MCF 10A (cell line): ENCODE measurements at regions of chr7 and their contacts with region 1.

Region 1: GRCh38 chr7:44565097-44565794 is 8.5 kb downstream of the DDX56 start:
- DNase-seq: peak; percentile 62
- H3K4me3 Mint-ChIP-seq: no peak overlapping the region
- H3K27ac Mint-ChIP-seq: no peak overlapping the region
- H3K4me1 Mint-ChIP-seq: peaks cover 16% of the 10 kb centered on the region
- H3K27me3 Mint-ChIP-seq: no peaks in the 10 kb centered on the region
- CTCF ChIP-seq: peak; percentile 95

Region 2: DNA sequence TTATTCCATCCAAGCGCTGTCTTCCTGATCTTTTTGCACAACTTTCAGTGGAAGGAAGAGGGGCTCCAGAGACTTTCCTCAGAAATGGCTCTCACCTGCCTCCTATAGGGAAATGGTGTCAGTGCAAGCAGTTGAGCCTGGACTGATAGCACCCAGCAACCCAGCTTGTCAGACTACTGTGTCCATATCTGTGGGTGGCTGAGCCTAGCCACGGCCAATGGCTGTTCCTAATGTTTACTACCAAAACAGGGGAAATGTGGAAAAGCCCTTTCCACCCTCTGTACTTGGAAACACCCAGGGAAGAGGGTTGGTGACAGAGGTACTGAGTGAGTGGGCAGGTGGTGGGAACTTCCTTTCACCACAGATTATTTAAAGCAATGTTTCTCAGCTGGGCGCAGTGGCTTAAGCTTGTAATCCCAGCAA is 368.8 kb before region 1 on chr7:
- CTCF ChIA-PET with region 1: no interaction called
- POLR2A ChIA-PET with region 1: no interaction called
- intact Hi-C with region 1: no loop called
- DNase-seq: peak; percentile 71
- H3K4me3 Mint-ChIP-seq: no peak overlapping the region
- H3K27ac Mint-ChIP-seq: no peak overlapping the region
- H3K4me1 Mint-ChIP-seq: peaks cover 7% of the 10 kb centered on the region
- H3K27me3 Mint-ChIP-seq: no peaks in the 10 kb centered on the region
- CTCF ChIP-seq: peak; percentile 63

Region 3: GRCh38 chr7:44240983-44241510 is 324.2 kb before region 1 on chr7:
- CTCF ChIA-PET with region 1: interaction called, 51 read pairs
- POLR2A ChIA-PET with region 1: no interaction called
- intact Hi-C with region 1: loop called (anchors 1 kb)
- DNase-seq: peak; percentile 85
- H3K4me3 Mint-ChIP-seq: no peak overlapping the region
- H3K27ac Mint-ChIP-seq: peak overlapping the region; percentile 27
- H3K4me1 Mint-ChIP-seq: peaks cover 7% of the 10 kb centered on the region
- H3K27me3 Mint-ChIP-seq: no peaks in the 10 kb centered on the region
- CTCF ChIP-seq: peak; percentile 83

Region 4: DNA sequence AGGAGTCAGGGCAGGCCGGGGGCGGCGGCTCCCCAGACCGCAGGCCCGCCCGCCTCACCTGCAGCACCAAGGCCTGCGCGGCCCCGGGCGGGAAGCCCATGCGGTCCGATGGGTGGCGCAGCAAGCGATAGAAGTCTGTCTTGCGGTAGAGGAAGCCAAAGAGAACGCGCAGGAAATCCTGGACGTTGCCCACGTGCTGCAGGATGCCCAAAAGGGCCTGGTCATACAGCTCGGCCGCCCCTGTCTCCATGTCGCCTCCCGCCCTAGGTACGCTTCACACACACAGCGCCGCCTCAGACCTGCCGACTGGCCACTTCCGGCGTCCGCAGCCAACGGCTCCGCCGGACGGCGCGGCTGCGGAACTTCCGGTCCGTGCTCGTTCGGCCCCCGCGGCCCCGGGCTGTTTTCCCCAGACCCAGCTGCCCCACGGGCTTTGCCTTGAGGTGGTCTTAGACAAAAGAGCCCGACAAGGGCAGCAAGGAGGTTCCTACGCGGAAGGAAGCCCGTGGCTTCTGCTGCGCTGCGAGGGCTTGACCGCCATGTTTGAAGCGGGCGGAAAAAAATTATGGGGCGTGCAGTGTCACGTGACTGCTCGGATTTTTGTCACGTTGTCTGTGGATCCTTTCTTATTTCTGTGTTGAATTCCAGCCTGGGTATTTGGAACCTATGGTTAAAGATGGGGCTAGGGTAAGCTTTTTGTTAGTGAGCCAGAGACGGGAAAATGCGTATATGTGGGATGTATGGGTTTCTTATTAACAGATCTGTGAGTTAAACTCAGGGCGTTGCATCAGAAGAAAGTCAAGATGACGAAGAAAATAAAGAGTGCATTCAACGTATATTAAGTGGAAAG is 74.7 kb before region 1 on chr7 and contains the start of gene NUDCD3:
- CTCF ChIA-PET with region 1: interaction called, 43 read pairs
- POLR2A ChIA-PET with region 1: interaction called, 52 read pairs
- intact Hi-C with region 1: loop called (anchors 1 kb)
- DNase-seq: peak; percentile 84
- H3K4me3 Mint-ChIP-seq: peak within 1 kb of the TSS; percentile 80
- H3K27ac Mint-ChIP-seq: peak within 1 kb of the TSS; percentile 88
- H3K4me1 Mint-ChIP-seq: peaks cover 37% of the 10 kb centered on the region
- H3K27me3 Mint-ChIP-seq: no peaks in the 10 kb centered on the region
- CTCF ChIP-seq: no peak
- total RNA-seq, gene NUDCD3: 85.5 and 87.7 TPM in 2 replicates

Region 5: GRCh38 chr7:44534501-44534900 is 30.7 kb before region 1 on chr7:
- CTCF ChIA-PET with region 1: interaction called, 12 read pairs
- POLR2A ChIA-PET with region 1: no interaction called
- intact Hi-C with region 1: no loop called
- DNase-seq: peak; percentile 62
- H3K4me3 Mint-ChIP-seq: no peak overlapping the region
- H3K27ac Mint-ChIP-seq: no peak overlapping the region
- H3K4me1 Mint-ChIP-seq: peaks cover 9% of the 10 kb centered on the region
- H3K27me3 Mint-ChIP-seq: no peaks in the 10 kb centered on the region
- CTCF ChIP-seq: peak; percentile 53

Region 6: DNA sequence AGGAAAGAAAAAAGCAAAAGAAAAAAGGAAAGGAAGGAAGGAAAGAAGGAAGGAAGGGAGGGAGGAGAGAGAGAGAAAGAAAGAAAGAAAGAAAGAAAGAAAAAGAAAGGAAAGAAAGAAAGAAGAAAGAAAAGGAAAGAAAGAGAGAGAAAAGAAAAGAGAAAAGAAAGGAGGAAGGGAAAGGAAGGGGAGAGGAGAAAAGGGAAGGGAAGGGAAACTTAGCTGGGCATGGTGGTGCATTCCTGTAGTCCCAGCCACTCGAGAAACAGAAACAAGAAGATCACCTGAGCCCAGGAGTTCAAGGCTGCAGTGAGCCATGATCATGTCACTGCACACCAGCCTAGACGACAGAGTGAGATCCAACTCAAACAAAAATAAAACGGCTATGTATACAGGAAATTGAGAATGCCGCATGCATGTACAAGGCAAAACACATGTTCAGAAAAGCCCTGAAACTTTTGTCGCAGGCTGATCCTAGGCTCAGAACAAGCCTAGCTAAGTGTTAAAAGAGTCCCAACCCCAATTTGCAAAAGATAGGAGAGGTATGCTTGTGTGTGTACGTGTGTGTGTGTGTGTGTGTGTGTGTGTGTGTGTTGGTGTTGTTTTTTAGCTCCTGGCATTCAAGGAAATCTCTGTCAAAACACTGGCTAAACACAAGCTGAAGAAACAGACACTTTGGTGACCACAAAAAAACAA is 17.6 kb before region 1 on chr7:
- CTCF ChIA-PET with region 1: interaction called, 36 read pairs
- POLR2A ChIA-PET with region 1: interaction called, 15 read pairs
- intact Hi-C with region 1: no loop called
- DNase-seq: peak; percentile 24
- H3K4me3 Mint-ChIP-seq: no peak overlapping the region
- H3K27ac Mint-ChIP-seq: no peak overlapping the region
- H3K4me1 Mint-ChIP-seq: peaks cover 27% of the 10 kb centered on the region
- H3K27me3 Mint-ChIP-seq: no peaks in the 10 kb centered on the region
- CTCF ChIP-seq: no peak